Vagina (tissue), 2 donors: ENCODE measurements at regions of chr19 and their contacts with region 1.

Region 1: GRCh38 chr19:3618144-3618810 is 8.3 kb downstream of the CACTIN start:
- DNase-seq: no peak
- H3K4me3 ChIP-seq: no peak overlapping the region
- H3K27ac ChIP-seq: peak overlapping the region; percentile 65
- H3K4me1 ChIP-seq: peaks cover 17% of the 10 kb centered on the region
- H3K27me3 ChIP-seq: no peaks in the 10 kb centered on the region
- CTCF ChIP-seq: peak; percentile 94 to 99 (median 94)
- POLR2A ChIP-seq: no peak

Region 2: GRCh38 chr19:3403489-3404323 is 214.6 kb before region 1 on chr19:
- intact Hi-C with region 1: no loop called
- DNase-seq: peak in 1 of 2 donors; percentile 97
- H3K4me3 ChIP-seq: peak overlapping the region; percentile 46 to 61
- H3K27ac ChIP-seq: peak overlapping the region; percentile 100
- H3K4me1 ChIP-seq: peaks cover 82% of the 10 kb centered on the region
- H3K27me3 ChIP-seq: no peaks in the 10 kb centered on the region
- CTCF ChIP-seq: no peak
- POLR2A ChIP-seq: no peak

Region 3: DNA sequence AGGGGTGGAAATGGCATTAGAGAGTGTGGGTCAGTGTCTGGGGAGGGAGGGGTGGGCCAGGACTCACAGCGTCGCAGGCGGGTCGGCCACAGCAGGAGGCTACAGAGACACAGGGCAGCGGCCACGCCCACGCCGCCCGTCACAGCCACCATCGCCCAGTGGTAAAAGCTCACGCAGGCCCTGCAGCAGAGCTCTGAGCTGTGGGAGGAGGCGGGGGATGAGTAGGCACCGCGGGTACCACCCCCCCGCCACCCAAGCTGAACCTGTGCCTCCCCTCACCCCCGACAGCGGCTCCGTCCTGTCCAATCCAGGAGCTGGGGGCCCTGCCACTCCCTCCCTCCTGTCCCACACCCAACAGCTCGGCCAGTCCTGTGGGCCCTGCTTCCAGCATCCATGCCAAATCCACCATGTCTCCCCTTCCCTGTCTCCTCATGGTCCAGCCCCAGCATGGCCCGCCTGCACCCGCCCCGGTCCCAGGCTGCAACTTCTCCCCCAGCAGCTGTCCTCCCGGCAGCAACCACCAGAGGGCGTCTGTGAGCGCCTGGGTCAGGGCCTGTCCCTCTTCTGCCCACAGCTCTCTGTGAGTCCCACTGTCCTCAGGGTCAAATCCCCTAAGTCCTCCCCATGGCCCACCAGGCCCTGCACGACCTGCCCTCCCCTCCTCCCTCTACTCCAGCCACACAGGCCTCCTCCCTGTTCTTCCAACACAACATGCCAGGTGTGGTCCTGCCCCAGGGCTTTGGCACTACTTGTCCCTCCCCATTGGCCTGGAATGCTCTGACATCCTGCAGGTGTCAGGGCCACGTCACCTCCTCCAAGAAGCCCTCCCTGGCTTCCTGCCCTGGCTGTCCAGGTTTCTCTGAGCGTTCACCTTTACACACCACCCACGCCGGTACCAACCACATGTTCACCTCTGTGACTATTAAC is 73.3 kb before region 1 on chr19:
- intact Hi-C with region 1: loop called (anchors 2 kb)
- DNase-seq: no peak
- H3K4me3 ChIP-seq: no peak overlapping the region
- H3K27ac ChIP-seq: no peak overlapping the region
- H3K4me1 ChIP-seq: no peaks in the 10 kb centered on the region
- H3K27me3 ChIP-seq: no peaks in the 10 kb centered on the region
- CTCF ChIP-seq: peak; percentile 78 to 92 (median 81)
- POLR2A ChIP-seq: no peak

Region 4: GRCh38 chr19:3575260-3575741 is 43.0 kb before region 1 on chr19:
- intact Hi-C with region 1: loop called (anchors 5 kb)
- DNase-seq: no peak
- H3K4me3 ChIP-seq: no peak overlapping the region
- H3K27ac ChIP-seq: no peak overlapping the region
- H3K4me1 ChIP-seq: peaks cover 34% of the 10 kb centered on the region
- H3K27me3 ChIP-seq: no peaks in the 10 kb centered on the region
- CTCF ChIP-seq: no peak
- POLR2A ChIP-seq: no peak

Region 5: GRCh38 chr19:3586124-3586626 is 32.1 kb before region 1 on chr19:
- intact Hi-C with region 1: loop called (anchors 2 kb)
- DNase-seq: no peak
- H3K4me3 ChIP-seq: peak overlapping the region; percentile 31 to 50
- H3K27ac ChIP-seq: no peak overlapping the region
- H3K4me1 ChIP-seq: peaks cover 14% of the 10 kb centered on the region
- H3K27me3 ChIP-seq: no peaks in the 10 kb centered on the region
- CTCF ChIP-seq: peak in 1 of 3 experiments; percentile 19
- POLR2A ChIP-seq: no peak

Region 6: GRCh38 chr19:3743486-3743885 is 125.2 kb after region 1 on chr19:
- intact Hi-C with region 1: no loop called
- DNase-seq: no peak
- H3K4me3 ChIP-seq: no peak overlapping the region
- H3K27ac ChIP-seq: no peak overlapping the region
- H3K4me1 ChIP-seq: no peaks in the 10 kb centered on the region
- H3K27me3 ChIP-seq: no peaks in the 10 kb centered on the region
- CTCF ChIP-seq: no peak
- POLR2A ChIP-seq: no peak